Mucosa of descending colon (tissue), 3 donors: ENCODE measurements at regions of chr20 and their contacts with region 1.

Region 1: GRCh38 chr20:33465481-33466302 is 22.1 kb upstream of the SNTA1 start:
- DNase-seq: no peak
- ATAC-seq: no peak
- H3K4me3 ChIP-seq: no peak overlapping the region
- H3K4me1 ChIP-seq: no peaks in the 10 kb centered on the region
- CTCF ChIP-seq: no peak

Region 2: DNA sequence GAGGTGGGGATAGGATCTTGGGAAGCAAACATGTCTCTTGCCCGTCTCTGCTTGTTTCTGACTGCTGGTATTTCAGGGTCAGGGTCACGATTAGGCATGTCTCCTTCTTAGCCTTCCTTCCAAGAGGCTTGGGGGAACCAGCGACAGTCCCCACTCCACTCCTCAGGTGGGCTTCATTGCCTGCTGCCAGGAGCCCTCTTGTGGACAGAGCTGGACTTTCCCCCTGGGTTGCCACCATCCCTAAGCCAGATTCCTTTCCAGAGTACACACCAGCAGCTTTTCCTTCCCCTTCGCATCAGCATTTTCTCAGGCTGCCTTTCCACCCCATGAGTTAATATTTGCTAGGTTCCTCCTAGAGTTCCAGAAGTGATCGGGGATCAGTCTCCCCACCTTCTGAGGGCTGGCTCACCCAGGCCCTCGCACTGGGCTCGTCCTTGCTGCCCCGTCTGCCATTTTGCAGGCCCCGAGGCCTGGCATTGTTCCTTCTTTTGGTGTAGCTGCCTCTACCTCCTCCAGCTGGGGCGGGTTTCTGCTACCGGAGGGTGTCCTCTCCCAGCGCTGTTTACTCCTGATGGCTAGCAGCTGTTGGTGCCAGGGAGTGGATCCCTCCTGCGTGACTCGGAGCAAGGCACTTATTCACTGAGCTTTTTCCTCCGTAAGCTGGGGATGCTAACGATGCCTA is 187.7 kb after region 1 on chr20:
- intact Hi-C with region 1: loop called (anchors 10 kb)
- DNase-seq: peak in 2 of 3 donors; percentile 71 to 76
- ATAC-seq: peak; percentile 51
- H3K4me3 ChIP-seq: no peak overlapping the region
- H3K4me1 ChIP-seq: peaks cover 45% of the 10 kb centered on the region
- CTCF ChIP-seq: no peak